HepG2 (cell line): ENCODE measurements at regions of chr17 and their contacts with region 1.

Region 1: GRCh38 chr17:73203135-73203787 is 10.4 kb downstream of the COG1 start:
- DNase-seq: peak; percentile 96
- ATAC-seq: peak; percentile 41
- H3K4me3 ChIP-seq: peak overlapping the region in 2 of 3 experiments; percentile 2 to 36; a peak in 1 of 6 replicates
- H3K27ac ChIP-seq: peak overlapping the region; percentile 83
- H3K4me1 ChIP-seq: peaks cover 70% of the 10 kb centered on the region
- H3K27me3 ChIP-seq: no peaks in the 10 kb centered on the region
- CTCF ChIP-seq: no peak
- EP300 ChIP-seq: peak in 1 of 2 experiments; percentile 68; a peak in 2 of 4 replicates
- POLR2A ChIP-seq: peak; percentile 25 to 39; a peak in 1 of 4 replicates
- RAD21 ChIP-seq: no peak

Region 2: GRCh38 chr17:72743037-72743467 is 460.2 kb before region 1 on chr17:
- CTCF ChIA-PET with region 1: no interaction called
- POLR2A ChIA-PET with region 1: no interaction called
- in situ Hi-C with region 1: no loop called
- intact Hi-C with region 1: no loop called
- DNase-seq: no peak
- ATAC-seq: peak; percentile 51
- H3K4me3 ChIP-seq: no peak overlapping the region
- H3K27ac ChIP-seq: no peak overlapping the region
- H3K4me1 ChIP-seq: peaks cover 8% of the 10 kb centered on the region; the same call in 1 of the 2 replicates
- H3K27me3 ChIP-seq: no peaks in the 10 kb centered on the region
- CTCF ChIP-seq: no peak
- EP300 ChIP-seq: no peak
- POLR2A ChIP-seq: no peak
- RAD21 ChIP-seq: no peak

Region 3: DNA sequence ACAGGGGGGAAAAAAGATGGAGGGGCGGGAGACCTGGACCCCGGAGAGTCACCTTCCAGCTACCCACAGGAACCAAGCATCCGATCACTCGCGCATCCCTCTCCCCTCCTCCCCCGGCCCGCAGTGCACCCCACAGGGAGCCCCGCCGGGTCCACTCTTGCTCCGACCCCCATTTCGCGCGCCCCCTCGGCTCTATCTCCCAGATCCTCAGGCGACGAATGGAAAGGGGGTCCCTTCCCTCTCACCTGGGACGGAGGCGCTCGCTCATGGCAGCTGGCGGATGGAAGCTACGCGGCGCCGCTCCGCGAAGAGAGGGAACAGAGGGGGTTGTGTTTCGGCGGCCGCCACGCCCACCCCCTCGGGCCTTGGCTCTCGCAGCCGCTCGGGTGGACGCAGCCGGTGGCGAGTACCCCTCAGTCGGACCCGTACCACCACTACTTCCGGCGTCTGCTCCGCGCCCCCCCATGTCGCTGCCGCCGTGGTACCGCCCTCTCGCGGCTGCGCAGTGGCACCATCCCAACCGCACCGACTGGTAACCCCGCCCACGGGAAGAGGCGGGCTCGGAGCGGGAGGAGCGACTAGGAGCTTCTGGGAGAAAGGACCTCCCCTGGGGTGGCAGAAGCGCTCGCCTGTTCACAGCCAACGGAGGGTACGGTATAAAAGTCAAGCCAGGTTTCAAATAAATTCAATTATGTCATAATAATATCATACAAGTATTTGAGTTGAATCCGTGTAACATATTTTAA is 28.8 kb after region 1 on chr17:
- CTCF ChIA-PET with region 1: no interaction called
- POLR2A ChIA-PET with region 1: interaction called, 47 read pairs
- in situ Hi-C with region 1: no loop called
- intact Hi-C with region 1: loop called (anchors 2 kb)
- DNase-seq: peak; percentile 94
- ATAC-seq: peak; percentile 91
- H3K4me3 ChIP-seq: peak overlapping the region; percentile 97 to 98 (median 97)
- H3K27ac ChIP-seq: peak overlapping the region; percentile 77
- H3K4me1 ChIP-seq: peaks cover 61% of the 10 kb centered on the region
- H3K27me3 ChIP-seq: peaks cover 0 to 4% of the 10 kb centered on the region in 2 experiments; a peak in 1 of 5 replicates
- CTCF ChIP-seq: peak; percentile 78
- EP300 ChIP-seq: no peak; a peak in 1 of 4 replicates
- POLR2A ChIP-seq: peak; percentile 60 to 87
- RAD21 ChIP-seq: peak; percentile 51; the same call in 1 of the 2 replicates

Region 4: GRCh38 chr17:73371285-73371684 is 168.0 kb after region 1 on chr17:
- CTCF ChIA-PET with region 1: no interaction called
- POLR2A ChIA-PET with region 1: no interaction called
- in situ Hi-C with region 1: no loop called
- intact Hi-C with region 1: loop called (anchors 5 kb)
- DNase-seq: no peak
- ATAC-seq: no peak
- H3K4me3 ChIP-seq: no peak overlapping the region
- H3K27ac ChIP-seq: no peak overlapping the region
- H3K4me1 ChIP-seq: peaks cover 14% of the 10 kb centered on the region
- H3K27me3 ChIP-seq: peaks cover 7 to 73% of the 10 kb centered on the region in 2 experiments; a peak in 4 of 5 replicates
- CTCF ChIP-seq: no peak
- EP300 ChIP-seq: no peak
- POLR2A ChIP-seq: no peak
- RAD21 ChIP-seq: no peak